Gastrocnemius medialis (tissue), 4 donors: ENCODE measurements at regions of chr15 and their contacts with region 1.

Region 1: GRCh38 chr15:78018946-78019644 is 58.4 kb downstream of the TBC1D2B start:
- DNase-seq: no peak
- ATAC-seq: no peak
- H3K4me3 ChIP-seq: no peak overlapping the region
- H3K27ac ChIP-seq: no peak overlapping the region
- H3K4me1 ChIP-seq: peaks cover 7 to 10% of the 10 kb centered on the region in 2 donors
- H3K27me3 ChIP-seq: no peaks in the 10 kb centered on the region
- CTCF ChIP-seq: no peak
- POLR2A ChIP-seq: no peak

Region 2: DNA sequence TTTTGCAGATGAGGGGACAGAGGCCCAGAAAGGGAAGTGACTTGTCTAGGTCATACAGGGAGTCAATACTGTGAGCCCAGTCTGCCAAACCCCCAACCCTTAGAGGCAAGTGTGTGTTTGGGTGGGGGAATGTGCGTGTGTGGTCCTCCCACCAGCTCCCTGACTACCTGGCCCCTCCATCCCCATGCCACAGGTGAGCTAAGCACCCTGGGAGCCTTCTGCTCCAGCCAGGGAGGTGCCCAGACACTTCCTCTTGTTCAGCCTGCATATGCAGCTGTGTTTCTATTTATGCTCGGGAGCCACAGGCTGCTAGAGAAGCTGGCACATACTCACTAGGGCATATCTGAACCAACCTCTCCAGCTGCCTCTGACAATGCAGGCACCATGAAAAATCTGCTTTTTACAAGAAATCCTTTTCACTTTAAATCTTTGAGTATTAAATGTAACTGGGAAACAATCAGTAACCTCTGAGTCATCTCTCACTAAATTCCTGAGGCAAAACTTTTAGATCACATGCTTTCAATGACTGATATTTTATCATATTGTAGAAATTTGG is 37.7 kb after region 1 on chr15:
- in situ Hi-C with region 1: loop called in 1 of 4 experiments (anchors 10 kb)
- intact Hi-C with region 1: loop called (anchors 2 kb)
- DNase-seq: no peak
- ATAC-seq: peak; percentile 57 to 89
- H3K4me3 ChIP-seq: no peak overlapping the region
- H3K27ac ChIP-seq: peak overlapping the region; percentile 22 to 56 (median 51)
- H3K4me1 ChIP-seq: peaks cover 52 to 71% of the 10 kb centered on the region in 2 donors
- H3K27me3 ChIP-seq: no peaks in the 10 kb centered on the region
- CTCF ChIP-seq: no peak
- POLR2A ChIP-seq: no peak

Region 3: DNA sequence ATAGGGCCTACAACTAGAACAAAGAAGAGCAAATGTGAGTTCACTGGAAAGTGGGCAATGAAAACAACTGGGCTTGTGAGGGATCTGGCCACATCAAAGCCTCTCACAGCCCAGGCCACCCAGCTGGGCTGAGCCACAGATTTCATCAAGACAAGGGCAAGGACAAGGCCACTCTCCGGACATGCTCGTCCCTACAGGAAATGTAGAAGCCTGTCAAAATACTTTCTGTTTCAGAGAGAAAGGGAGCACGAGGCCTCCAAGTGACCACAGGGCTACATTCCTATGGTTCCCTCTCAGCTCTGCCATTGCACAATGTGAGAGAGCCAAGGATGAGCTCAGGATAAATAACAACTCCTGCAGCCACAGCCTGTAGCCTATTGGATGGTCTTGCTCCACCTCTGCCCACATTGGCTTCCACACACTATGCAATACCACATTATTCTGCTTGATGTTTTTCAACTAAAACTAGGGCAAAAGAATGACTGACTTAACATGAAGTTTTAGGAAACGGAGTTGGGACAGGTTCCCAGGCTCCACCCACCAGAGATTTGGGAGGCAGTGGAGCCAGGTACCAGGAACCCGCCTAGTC is 46.3 kb after region 1 on chr15:
- in situ Hi-C with region 1: loop called in 1 of 4 experiments (anchors 10 kb)
- intact Hi-C with region 1: no loop called
- DNase-seq: peak; percentile 75 to 88
- ATAC-seq: peak; percentile 86 to 90
- H3K4me3 ChIP-seq: no peak overlapping the region
- H3K27ac ChIP-seq: peak overlapping the region; percentile 71 to 83 (median 74)
- H3K4me1 ChIP-seq: peaks cover 76 to 92% of the 10 kb centered on the region in 2 donors
- H3K27me3 ChIP-seq: no peaks in the 10 kb centered on the region
- CTCF ChIP-seq: no peak
- POLR2A ChIP-seq: no peak